IMR-90 (cell line): ENCODE measurements at regions of chr2 and their contacts with region 1.

Region 1: GRCh38 chr2:172285010-172285621 is 142.3 kb upstream of the ITGA6 start:
- DNase-seq: peak; percentile 78
- ATAC-seq: peak; percentile 48
- H3K4me3 ChIP-seq: no peak overlapping the region
- H3K27ac ChIP-seq: peak overlapping the region; percentile 11
- H3K4me1 ChIP-seq: peaks cover 13% of the 10 kb centered on the region
- H3K27me3 ChIP-seq: no peaks in the 10 kb centered on the region
- CTCF ChIP-seq: no peak
- POLR2A ChIP-seq: no peak
- RAD21 ChIP-seq: no peak

Region 2: GRCh38 chr2:172172513-172173173 is 112.5 kb before region 1 on chr2:
- CTCF ChIA-PET with region 1: interaction called, 5 read pairs
- POLR2A ChIA-PET with region 1: no interaction called
- dilution Hi-C with region 1: no loop called
- in situ Hi-C with region 1: no loop called
- intact Hi-C with region 1: loop called (anchors 10 kb)
- DNase-seq: peak; percentile 44
- ATAC-seq: peak; percentile 99
- H3K4me3 ChIP-seq: peak overlapping the region; percentile 77
- H3K27ac ChIP-seq: peak overlapping the region; percentile 33; the same call in 1 of the 2 replicates
- H3K4me1 ChIP-seq: peaks cover 2% of the 10 kb centered on the region; the same call in 1 of the 2 replicates
- H3K27me3 ChIP-seq: 0 out of 2 replicates have a peak, but pooled peaks cover 3% of the 10 kb centered on the region
- CTCF ChIP-seq: peak; percentile 91
- POLR2A ChIP-seq: 0 out of 2 replicates have a peak, but pooled peaks have one; percentile 50
- RAD21 ChIP-seq: peak; percentile 96